PC-9 (cell line): ENCODE measurements at regions of chr19 and their contacts with region 1.

Region 1: DNA sequence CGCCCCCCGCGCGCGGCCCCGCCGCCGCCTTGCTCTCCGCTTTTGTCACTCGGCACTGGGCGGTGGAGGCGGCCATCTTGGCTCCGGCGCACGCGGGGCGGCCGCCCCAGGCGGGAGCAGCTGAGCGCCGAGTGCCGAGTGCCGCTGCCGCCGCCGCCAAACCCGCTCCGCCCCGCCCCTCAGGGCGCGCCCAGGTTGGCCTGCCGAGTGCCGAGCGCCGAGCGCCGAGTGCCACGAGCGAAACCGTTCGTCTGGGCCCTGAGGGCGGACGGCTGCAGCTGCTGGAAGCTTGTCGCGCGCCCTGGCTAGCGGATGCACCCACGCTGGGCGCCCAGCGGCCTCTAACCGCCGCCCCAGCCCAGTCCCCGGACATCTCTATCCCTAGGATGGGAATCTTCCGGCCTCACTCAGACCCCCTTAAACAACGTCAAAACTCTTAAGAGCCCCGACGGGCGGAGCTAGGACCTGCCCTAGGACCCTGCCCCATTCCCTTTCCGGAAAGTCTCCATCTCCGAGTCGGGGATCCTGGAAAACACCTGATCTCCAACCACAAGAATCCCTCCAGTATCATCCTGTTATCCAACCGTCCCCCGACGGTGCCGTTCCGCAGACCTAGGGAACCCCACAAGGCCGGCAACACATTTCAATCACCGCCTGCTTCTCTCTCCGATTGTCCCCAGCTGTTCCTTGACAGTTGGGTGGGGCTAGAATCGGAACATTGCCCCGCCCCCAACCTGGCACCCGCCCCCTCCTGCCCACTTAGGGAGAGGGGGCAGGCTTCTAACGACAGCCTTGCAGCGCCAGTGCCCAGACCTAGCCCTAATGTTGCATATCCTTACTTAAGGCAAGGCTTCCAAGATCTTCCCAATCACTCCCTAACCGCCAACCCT is 14.1 kb upstream of the AKAP8L start:
- DNase-seq: peak; percentile 74 to 91
- H3K4me3 ChIP-seq: peak overlapping the region; percentile 95
- H3K27ac ChIP-seq: 0 out of 2 replicates have a peak overlapping the region, but pooled peaks have one; percentile 13
- H3K4me1 ChIP-seq: peaks cover 12% of the 10 kb centered on the region
- H3K27me3 ChIP-seq: no peaks in the 10 kb centered on the region
- CTCF ChIP-seq: no peak

Region 2: GRCh38 chr19:15452111-15453047 is 19.5 kb after region 1 on chr19:
- CTCF ChIA-PET with region 1: no interaction called
- POLR2A ChIA-PET with region 1: interaction called, 12 read pairs
- intact Hi-C with region 1: no loop called
- DNase-seq: peak; percentile 87
- H3K4me3 ChIP-seq: peak overlapping the region; percentile 40; the same call in 1 of the 2 replicates
- H3K27ac ChIP-seq: no peak overlapping the region
- H3K4me1 ChIP-seq: peaks cover 10% of the 10 kb centered on the region; the same call in 1 of the 2 replicates
- H3K27me3 ChIP-seq: no peaks in the 10 kb centered on the region
- CTCF ChIP-seq: no peak